ENCODE measurements at regions of chr15 and their contacts with region 1.

Region 1: DNA sequence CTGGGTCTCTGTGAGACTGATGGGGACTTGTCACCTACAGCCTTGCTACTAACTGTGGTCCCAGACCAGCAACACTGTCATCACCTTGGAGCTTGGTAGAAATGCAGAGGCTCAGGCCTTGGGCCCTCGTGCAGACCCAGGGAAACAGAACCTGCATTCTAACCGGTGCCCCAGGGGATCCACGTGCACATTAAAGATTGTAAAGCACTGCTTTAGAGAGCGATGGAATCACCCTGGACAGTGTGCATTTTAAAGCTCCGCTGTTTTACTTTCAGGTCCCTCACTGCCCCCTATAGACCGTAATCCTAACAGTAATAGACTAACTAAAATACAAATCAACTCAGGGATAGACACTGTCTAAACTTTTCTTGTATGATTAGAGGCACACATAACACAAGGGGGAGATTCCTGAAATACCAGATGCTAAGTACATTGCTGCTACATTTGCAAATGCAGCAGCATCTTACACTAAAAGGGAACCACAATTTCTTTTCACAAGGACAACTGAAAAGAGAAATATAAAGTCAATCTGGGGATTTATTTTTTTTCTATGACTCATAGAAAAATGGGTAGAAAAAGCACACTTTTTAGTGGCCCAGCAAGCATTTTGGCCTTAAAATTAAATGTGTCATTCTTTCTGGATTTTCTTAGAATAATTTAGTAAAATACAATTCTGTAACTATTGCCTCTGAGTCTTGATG is 10.5 kb upstream of the SH3GL3 start:
- DNase-seq: no peak
- ATAC-seq: no peak
- H3K4me3 Mint-ChIP-seq: no peak overlapping the region
- H3K27ac Mint-ChIP-seq: no peak overlapping the region
- H3K4me1 Mint-ChIP-seq: no peaks in the 10 kb centered on the region
- H3K27me3 Mint-ChIP-seq: peaks cover 10% of the 10 kb centered on the region

Region 2: DNA sequence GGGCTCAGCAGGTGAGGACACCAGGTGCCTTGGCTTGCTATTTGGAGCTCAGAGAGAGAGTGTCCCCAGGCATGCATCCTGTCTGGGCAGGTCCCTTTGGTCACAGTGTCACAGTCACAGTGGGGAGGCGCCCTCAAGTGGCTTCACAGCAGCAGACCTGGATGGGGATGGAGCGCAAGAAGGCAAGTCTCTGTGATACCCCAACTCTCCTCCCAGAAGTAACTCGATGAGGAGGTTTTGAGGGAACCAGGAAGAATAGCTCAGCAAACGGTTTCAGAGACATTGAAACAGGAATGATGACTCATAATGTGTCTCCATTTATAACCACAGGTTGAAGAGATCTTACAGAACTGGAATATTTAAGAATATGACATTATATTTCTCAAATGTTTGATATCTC is 55.9 kb before region 1 on chr15:
- CTCF ChIA-PET with region 1: no interaction called
- POLR2A ChIA-PET with region 1: no interaction called
- DNase-seq: peak; percentile 69
- ATAC-seq: peak; percentile 86
- H3K4me3 Mint-ChIP-seq: no peak overlapping the region
- H3K27ac Mint-ChIP-seq: no peak overlapping the region
- H3K4me1 Mint-ChIP-seq: peaks cover 5% of the 10 kb centered on the region
- H3K27me3 Mint-ChIP-seq: peaks cover 32% of the 10 kb centered on the region

Region 3: DNA sequence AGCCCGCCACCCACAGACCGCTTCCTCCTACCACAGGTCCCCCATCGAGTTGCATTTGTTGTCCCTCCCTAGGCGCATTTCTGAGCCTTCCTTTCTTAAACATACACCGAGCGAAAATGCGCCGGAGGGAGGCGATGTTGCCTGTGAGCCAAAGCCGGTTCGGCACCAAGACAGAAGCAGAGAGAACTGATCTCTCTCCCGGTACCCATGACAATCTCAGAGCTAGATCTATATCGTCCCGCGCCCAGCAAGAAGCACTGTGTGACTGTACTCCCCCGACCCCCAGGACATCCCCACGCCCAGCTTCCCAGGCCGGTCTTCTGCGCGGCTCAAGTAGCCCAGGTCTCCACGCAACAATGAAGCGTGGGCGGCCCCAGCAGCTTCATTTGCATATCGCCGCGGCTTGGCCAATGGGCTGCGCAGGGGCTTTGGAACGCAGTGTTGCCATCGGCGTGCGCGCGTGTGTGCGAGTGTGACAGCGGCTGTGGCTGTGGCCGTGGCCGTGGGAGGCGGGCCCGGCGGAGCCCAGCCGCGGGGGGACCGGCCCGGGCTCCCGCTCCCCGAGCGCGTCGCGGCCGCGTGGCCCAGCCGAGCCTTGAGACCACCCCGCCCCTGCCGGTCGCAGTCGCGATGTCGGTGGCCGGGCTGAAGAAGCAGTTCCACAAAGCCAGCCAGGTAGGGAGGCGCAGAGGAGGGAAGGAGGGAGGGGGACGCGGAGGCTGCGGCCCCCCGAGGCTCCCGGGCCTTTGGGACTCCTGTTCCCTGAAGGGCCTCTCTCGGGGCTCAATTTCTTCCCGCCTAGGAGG is 10.5 kb after region 1 on chr15 and contains the start of gene SH3GL3:
- CTCF ChIA-PET with region 1: interaction called, 13 read pairs
- POLR2A ChIA-PET with region 1: no interaction called
- DNase-seq: peak; percentile 74
- ATAC-seq: peak; percentile 94
- H3K4me3 Mint-ChIP-seq: peak within 1 kb of the TSS; percentile 64
- H3K27ac Mint-ChIP-seq: peak within 1 kb of the TSS; percentile 11
- H3K4me1 Mint-ChIP-seq: peaks cover 9% of the 10 kb centered on the region
- H3K27me3 Mint-ChIP-seq: peaks cover 43% of the 10 kb centered on the region
- total RNA-seq, gene SH3GL3: not detected

Region 4: DNA sequence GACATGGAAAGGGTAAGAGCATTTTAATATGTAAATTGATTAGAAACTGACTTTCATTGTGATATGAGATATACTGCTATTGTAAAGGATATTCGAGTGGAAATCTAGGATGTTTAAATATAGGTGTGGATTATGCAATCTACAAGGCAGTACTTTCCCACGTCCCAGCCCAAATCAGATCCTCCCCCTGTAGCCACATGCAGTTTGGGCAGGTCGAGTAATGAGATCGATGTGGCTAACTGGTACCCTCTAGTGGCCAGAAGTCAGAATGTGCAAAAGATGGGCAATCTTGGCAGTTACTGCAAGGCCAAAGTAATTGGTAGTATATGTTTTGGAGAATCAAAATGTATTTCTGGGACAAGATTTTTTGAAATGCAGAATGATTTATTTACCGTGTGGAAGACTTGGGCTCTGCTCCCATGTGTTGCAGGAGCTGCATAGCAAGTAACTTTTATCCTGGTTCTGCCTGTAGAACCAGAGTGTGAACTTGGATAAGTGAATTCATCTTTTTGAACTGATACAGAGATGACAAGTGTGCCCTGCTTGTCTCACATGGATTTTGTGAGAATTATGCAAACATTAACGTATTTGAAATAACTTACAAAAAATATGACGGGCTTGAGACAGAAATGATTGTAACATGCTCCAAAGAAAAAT is 122.8 kb after region 1 on chr15:
- CTCF ChIA-PET with region 1: interaction called, 17 read pairs
- POLR2A ChIA-PET with region 1: no interaction called
- DNase-seq: peak; percentile 68
- ATAC-seq: peak; percentile 72
- H3K4me3 Mint-ChIP-seq: no peak overlapping the region
- H3K27ac Mint-ChIP-seq: no peak overlapping the region
- H3K4me1 Mint-ChIP-seq: no peaks in the 10 kb centered on the region
- H3K27me3 Mint-ChIP-seq: peaks cover 5% of the 10 kb centered on the region

Region 5: GRCh38 chr15:83564975-83565532 is 128.4 kb after region 1 on chr15:
- CTCF ChIA-PET with region 1: interaction called, 17 read pairs
- POLR2A ChIA-PET with region 1: no interaction called
- DNase-seq: no peak
- ATAC-seq: no peak
- H3K4me3 Mint-ChIP-seq: no peak overlapping the region
- H3K27ac Mint-ChIP-seq: no peak overlapping the region
- H3K4me1 Mint-ChIP-seq: no peaks in the 10 kb centered on the region
- H3K27me3 Mint-ChIP-seq: peaks cover 5% of the 10 kb centered on the region